ENCODE measurements at regions of chr11 and their contacts with region 1.

Region 1: GRCh38 chr11:95089620-95090542 is at the start of gene ENDOD1:
- DNase-seq: peak; percentile 86

Region 2: GRCh38 chr11:95108159-95108611 is 18.3 kb after region 1 on chr11:
- CTCF ChIA-PET with region 1: interaction called, 27 read pairs
- POLR2A ChIA-PET with region 1: interaction called, 36 read pairs
- DNase-seq: no peak

Measured in HEK293T (cell line).